ENCODE measurements at regions of chr6 and their contacts with region 1.

Region 1: DNA sequence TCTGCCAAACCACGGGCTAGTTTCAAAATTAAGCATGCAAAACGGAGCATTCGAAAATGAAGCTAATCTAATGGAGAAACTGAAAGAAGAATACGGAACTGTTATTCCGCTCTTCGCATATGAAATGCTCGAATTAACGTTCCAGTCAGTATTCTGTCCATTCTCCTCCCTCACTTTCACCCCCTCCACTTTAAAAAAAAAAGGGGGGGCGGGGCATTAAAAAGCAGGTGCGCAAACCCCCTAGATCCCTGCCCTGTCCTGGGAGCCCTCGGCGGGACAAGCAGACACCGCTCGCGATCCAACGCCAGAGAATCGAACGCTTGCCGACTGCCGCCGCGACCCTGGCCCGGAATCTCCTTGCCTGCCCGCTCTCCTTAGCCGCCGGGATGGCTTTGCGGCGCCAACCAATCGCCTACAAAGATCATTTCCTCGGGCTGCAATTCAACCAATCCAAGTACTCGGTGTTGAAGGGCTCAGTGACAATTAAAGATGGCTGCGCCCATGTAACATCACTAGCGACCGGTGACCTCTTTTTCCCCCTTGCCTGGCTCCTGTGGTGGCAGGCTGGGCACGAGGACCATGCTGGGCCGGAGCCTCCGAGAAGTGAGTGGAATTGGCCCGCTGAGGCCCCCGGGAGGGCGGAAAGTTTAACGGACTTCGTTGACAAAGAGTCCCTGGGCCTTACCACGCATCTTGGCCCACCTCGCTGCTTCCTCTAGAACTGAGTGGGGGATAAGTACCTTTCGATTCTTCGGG is at the starts of genes QRSL1 and RTN4IP1:
- DNase-seq: peak; percentile 90
- H3K4me3 ChIP-seq: peak within 1 kb of the TSS; percentile 72 to 99 (median 99)
- H3K27ac ChIP-seq: peak within 1 kb of the TSS; percentile 93
- H3K4me1 ChIP-seq: peaks cover 4% of the 10 kb centered on the region
- H3K27me3 ChIP-seq: no peaks in the 10 kb centered on the region
- CTCF ChIP-seq: no peak
- total RNA-seq, gene QRSL1: 10.8 to 14.9 TPM
- total RNA-seq, gene RTN4IP1: 4.3 to 7.4 TPM

Region 2: DNA sequence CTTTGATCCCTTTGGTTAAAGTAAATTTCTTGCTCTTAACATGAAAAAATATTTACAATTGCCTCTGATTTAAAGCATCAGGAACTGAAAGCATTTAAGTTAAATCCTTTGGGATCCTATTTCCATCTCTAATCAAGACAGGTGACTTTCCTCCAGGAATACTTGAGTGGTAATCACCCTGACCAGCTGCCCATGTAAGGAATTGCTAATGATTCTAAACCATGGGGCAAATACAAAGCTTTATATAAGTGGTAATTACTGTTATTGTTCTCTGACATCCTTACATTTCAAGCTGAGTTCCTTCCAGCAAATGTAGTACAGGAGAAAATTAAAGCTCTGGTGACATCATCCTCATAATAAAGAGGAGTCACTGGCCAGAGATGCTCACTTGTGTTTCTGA is 168.2 kb before region 1 on chr6:
- CTCF ChIA-PET with region 1: no interaction called
- dilution Hi-C with region 1: no loop called
- in situ Hi-C with region 1: no loop called
- intact Hi-C with region 1: no loop called
- DNase-seq: no peak
- H3K4me3 ChIP-seq: no peak overlapping the region
- H3K27ac ChIP-seq: no peak overlapping the region
- H3K4me1 ChIP-seq: no peaks in the 10 kb centered on the region
- H3K27me3 ChIP-seq: no peaks in the 10 kb centered on the region
- CTCF ChIP-seq: no peak

Region 3: DNA sequence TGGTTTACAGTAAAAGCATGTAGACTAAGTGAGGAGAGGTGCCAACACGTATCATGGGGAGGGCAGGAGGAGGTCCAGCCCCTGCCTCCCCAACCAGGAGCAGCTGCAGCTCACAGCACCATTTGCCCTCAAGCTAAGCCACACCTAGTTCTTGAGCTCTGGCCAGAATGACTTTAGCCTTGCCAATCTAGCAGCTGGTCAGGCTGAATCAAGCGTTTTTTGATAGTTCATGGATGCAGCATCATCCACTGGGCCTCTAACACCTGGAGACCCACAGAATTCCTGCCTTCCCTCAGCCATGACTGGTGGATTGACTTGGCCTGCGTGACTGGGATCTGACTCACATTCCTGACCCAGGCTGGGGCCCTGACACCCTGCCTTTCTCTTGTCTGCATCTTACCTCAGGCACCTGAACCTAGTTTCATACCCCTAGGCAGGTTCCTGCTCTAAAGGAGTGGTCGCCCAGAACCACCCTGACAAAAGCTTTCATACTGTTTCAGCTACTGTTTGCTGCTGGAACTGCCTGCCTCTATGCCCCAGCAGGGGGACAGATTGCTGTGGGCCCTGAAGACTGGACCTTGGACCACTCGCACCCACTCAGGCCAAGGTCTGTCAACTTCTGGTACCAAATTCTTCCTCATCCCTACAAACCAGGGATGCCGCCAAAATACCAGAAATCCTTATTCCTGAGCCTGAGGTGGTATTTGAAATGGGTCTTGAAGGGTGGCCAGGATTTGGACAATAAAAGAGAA is 122.4 kb after region 1 on chr6:
- CTCF ChIA-PET with region 1: no interaction called
- dilution Hi-C with region 1: no loop called
- in situ Hi-C with region 1: no loop called
- intact Hi-C with region 1: loop called (anchors 2 kb)
- DNase-seq: peak; percentile 100
- H3K4me3 ChIP-seq: no peak overlapping the region
- H3K27ac ChIP-seq: peak overlapping the region; percentile 91
- H3K4me1 ChIP-seq: peaks cover 40% of the 10 kb centered on the region
- H3K27me3 ChIP-seq: no peaks in the 10 kb centered on the region
- CTCF ChIP-seq: peak in 1 of 2 donors; percentile 25

Region 4: GRCh38 chr6:107102414-107102990 is 473.2 kb after region 1 on chr6:
- CTCF ChIA-PET with region 1: no interaction called
- dilution Hi-C with region 1: no loop called
- in situ Hi-C with region 1: no loop called
- intact Hi-C with region 1: no loop called
- DNase-seq: no peak
- H3K4me3 ChIP-seq: no peak overlapping the region
- H3K27ac ChIP-seq: no peak overlapping the region
- H3K4me1 ChIP-seq: no peaks in the 10 kb centered on the region
- H3K27me3 ChIP-seq: no peaks in the 10 kb centered on the region
- CTCF ChIP-seq: no peak